H1 (cell line): ENCODE measurements at regions of chr22 and their contacts with region 1.

Region 1: GRCh38 chr22:40024201-40025061 is 29.7 kb downstream of the FAM83F start:
- DNase-seq: peak in 1 of 2 experiments; percentile 90
- H3K4me3 ChIP-seq: no peak overlapping the region
- H3K27ac ChIP-seq: peak overlapping the region; percentile 17; the same call in 1 of the 2 replicates
- H3K4me1 ChIP-seq: peaks cover 0 to 3% (median 0%) of the 10 kb centered on the region in 4 experiments; a peak in 3 of 7 replicates
- H3K27me3 ChIP-seq: no peaks in the 10 kb centered on the region
- CTCF ChIP-seq: peak; percentile 89 to 95 (median 90)
- EP300 ChIP-seq: no peak
- POLR2A ChIP-seq: no peak
- RAD21 ChIP-seq: peak; percentile 97 to 98

Region 2: GRCh38 chr22:39543095-39543494 is 481.3 kb before region 1 on chr22:
- CTCF ChIA-PET with region 1: interaction called, 20 read pairs
- POLR2A ChIA-PET with region 1: no interaction called
- DNase-seq: no peak
- H3K4me3 ChIP-seq: no peak overlapping the region
- H3K27ac ChIP-seq: no peak overlapping the region
- H3K4me1 ChIP-seq: peaks cover 0 to under 1% (median under 1%) of the 10 kb centered on the region in 4 experiments; a peak in 3 of 7 replicates
- H3K27me3 ChIP-seq: peaks cover 0 to 15% (median 11%) of the 10 kb centered on the region in 4 experiments; a peak in 6 of 7 replicates
- CTCF ChIP-seq: peak; percentile 67 to 89 (median 84)
- EP300 ChIP-seq: no peak
- POLR2A ChIP-seq: no peak
- RAD21 ChIP-seq: peak; percentile 75 to 78

Region 3: GRCh38 chr22:39927544-39927943 is 96.9 kb before region 1 on chr22:
- CTCF ChIA-PET with region 1: interaction called, 119 read pairs
- POLR2A ChIA-PET with region 1: interaction called, 10 read pairs
- DNase-seq: peak in 1 of 2 experiments; percentile 53
- H3K4me3 ChIP-seq: no peak overlapping the region
- H3K27ac ChIP-seq: no peak overlapping the region
- H3K4me1 ChIP-seq: peaks cover 0 to 2% (median 0%) of the 10 kb centered on the region in 4 experiments; a peak in 2 of 7 replicates
- H3K27me3 ChIP-seq: peaks cover 0 to 2% (median 0%) of the 10 kb centered on the region in 4 experiments; a peak in 1 of 7 replicates
- CTCF ChIP-seq: peak; percentile 65 to 83 (median 79)
- EP300 ChIP-seq: no peak
- POLR2A ChIP-seq: no peak
- RAD21 ChIP-seq: peak; percentile 63 to 74

Region 4: GRCh38 chr22:39954584-39955055 is 69.8 kb before region 1 on chr22:
- CTCF ChIA-PET with region 1: interaction called, 30 read pairs
- POLR2A ChIA-PET with region 1: interaction called, 3 read pairs
- DNase-seq: no peak
- H3K4me3 ChIP-seq: no peak overlapping the region
- H3K27ac ChIP-seq: no peak overlapping the region
- H3K4me1 ChIP-seq: peaks cover 0 to 5% (median 2%) of the 10 kb centered on the region in 4 experiments; a peak in 3 of 7 replicates
- H3K27me3 ChIP-seq: no peaks in the 10 kb centered on the region; a peak in 2 of 7 replicates
- CTCF ChIP-seq: no peak
- EP300 ChIP-seq: no peak
- POLR2A ChIP-seq: no peak
- RAD21 ChIP-seq: no peak

Region 5: GRCh38 chr22:39985383-39986035 is 38.9 kb before region 1 on chr22:
- CTCF ChIA-PET with region 1: interaction called, 10 read pairs
- POLR2A ChIA-PET with region 1: no interaction called
- DNase-seq: no peak
- H3K4me3 ChIP-seq: no peak overlapping the region
- H3K27ac ChIP-seq: no peak overlapping the region
- H3K4me1 ChIP-seq: peaks cover 0 to 4% (median 2%) of the 10 kb centered on the region in 4 experiments; a peak in 3 of 7 replicates
- H3K27me3 ChIP-seq: peaks cover 0 to 3% (median 0%) of the 10 kb centered on the region in 4 experiments; a peak in 4 of 7 replicates
- CTCF ChIP-seq: no peak
- EP300 ChIP-seq: no peak
- POLR2A ChIP-seq: no peak
- RAD21 ChIP-seq: no peak

Region 6: GRCh38 chr22:40036591-40037225 is 12.3 kb after region 1 on chr22:
- CTCF ChIA-PET with region 1: interaction called, 120 read pairs
- POLR2A ChIA-PET with region 1: interaction called, 4 read pairs
- DNase-seq: peak; percentile 58 to 77
- H3K4me3 ChIP-seq: no peak overlapping the region
- H3K27ac ChIP-seq: no peak overlapping the region
- H3K4me1 ChIP-seq: no peaks in the 10 kb centered on the region
- H3K27me3 ChIP-seq: peaks cover 0 to 6% (median 2%) of the 10 kb centered on the region in 4 experiments; a peak in 2 of 7 replicates
- CTCF ChIP-seq: peak; percentile 92 to 98 (median 98)
- EP300 ChIP-seq: no peak
- POLR2A ChIP-seq: no peak
- RAD21 ChIP-seq: peak; percentile 98

Region 7: DNA sequence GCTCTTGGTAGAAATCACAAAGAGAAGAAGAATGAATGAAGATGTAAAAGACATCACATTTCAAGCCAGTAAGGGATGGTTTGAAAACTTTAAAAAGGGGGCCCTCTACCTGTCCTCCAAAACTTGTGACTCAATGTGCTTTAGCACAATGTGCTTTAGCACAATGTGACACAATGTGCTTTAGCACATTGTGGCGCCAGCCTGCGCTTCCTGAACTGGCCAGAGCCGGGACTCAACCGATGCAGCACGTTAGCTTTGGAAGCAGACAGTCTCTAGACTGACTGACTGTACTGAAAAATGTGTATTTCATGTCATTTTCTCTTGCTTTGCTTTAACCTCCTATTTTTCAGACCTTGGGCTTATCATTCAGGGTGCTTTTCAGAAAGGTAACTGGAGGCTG is 33.8 kb after region 1 on chr22:
- CTCF ChIA-PET with region 1: no interaction called
- POLR2A ChIA-PET with region 1: no interaction called
- DNase-seq: no peak
- H3K4me3 ChIP-seq: no peak overlapping the region
- H3K27ac ChIP-seq: no peak overlapping the region
- H3K4me1 ChIP-seq: peaks cover 5 to 24% (median 10%) of the 10 kb centered on the region in 4 experiments
- H3K27me3 ChIP-seq: no peaks in the 10 kb centered on the region
- CTCF ChIP-seq: no peak
- EP300 ChIP-seq: no peak
- POLR2A ChIP-seq: no peak
- RAD21 ChIP-seq: no peak

Region 8: DNA sequence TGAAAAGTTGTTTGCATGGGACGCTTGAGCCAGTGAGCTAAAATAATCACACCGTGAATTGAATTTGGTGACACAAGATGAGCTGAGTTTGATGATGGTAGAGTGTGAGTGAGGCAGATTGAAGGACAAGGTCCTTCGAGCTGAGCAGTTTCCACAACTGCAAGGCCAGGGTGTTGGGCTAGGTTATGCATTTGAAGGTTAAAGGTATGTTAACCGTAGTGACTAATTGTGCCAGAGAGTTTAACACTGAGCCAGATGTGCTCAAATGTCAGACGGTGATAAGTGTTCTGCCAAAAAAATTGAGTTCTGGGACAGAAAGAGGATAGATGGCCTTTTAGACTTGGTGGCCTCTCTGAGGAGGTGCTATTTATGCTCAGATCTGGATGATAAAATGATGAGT is 59.8 kb after region 1 on chr22:
- CTCF ChIA-PET with region 1: no interaction called
- POLR2A ChIA-PET with region 1: no interaction called
- DNase-seq: no peak
- H3K4me3 ChIP-seq: no peak overlapping the region
- H3K27ac ChIP-seq: no peak overlapping the region
- H3K4me1 ChIP-seq: peaks cover 0 to 13% (median 8%) of the 10 kb centered on the region in 4 experiments; a peak in 5 of 7 replicates
- H3K27me3 ChIP-seq: no peaks in the 10 kb centered on the region
- CTCF ChIP-seq: no peak
- EP300 ChIP-seq: no peak
- POLR2A ChIP-seq: no peak
- RAD21 ChIP-seq: no peak